Esophagus squamous epithelium (tissue), 5 donors: ENCODE measurements at regions of chr5 and their contacts with region 1.

Region 1: DNA sequence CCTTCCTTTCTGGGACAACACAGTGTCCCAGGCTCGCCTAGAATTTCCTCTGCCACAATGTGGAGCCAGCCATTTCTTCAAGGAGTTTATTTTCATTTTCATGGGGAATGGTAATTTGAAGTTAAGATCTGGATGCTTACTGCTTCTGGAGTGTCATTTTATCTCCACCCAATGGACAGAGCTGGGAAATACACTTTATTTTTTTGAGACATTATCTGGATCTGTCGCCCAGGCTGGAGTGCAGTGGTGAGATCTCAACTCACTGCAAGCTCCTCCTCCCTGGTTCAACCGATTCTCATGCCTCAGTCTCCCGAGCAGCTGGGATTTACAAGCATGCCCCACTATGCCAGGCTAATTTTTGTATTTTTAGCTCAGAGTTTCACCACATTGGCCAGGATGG is 12.7 kb upstream of the THG1L start:
- DNase-seq: no peak
- H3K4me3 ChIP-seq: no peak overlapping the region
- H3K27ac ChIP-seq: no peak overlapping the region
- H3K4me1 ChIP-seq: peaks cover 0 to 13% (median 0%) of the 10 kb centered on the region in 3 donors
- H3K27me3 ChIP-seq: no peaks in the 10 kb centered on the region
- CTCF ChIP-seq: peak; percentile 30 to 72 (median 58)
- POLR2A ChIP-seq: no peak

Region 2: GRCh38 chr5:157294407-157295091 is 424.0 kb before region 1 on chr5:
- intact Hi-C with region 1: no loop called
- DNase-seq: no peak
- H3K4me3 ChIP-seq: no peak overlapping the region
- H3K27ac ChIP-seq: no peak overlapping the region
- H3K4me1 ChIP-seq: no peaks in the 10 kb centered on the region
- H3K27me3 ChIP-seq: no peaks in the 10 kb centered on the region
- CTCF ChIP-seq: no peak
- POLR2A ChIP-seq: no peak

Region 3: GRCh38 chr5:157431544-157432200 is 286.8 kb before region 1 on chr5:
- intact Hi-C with region 1: loop called (anchors 5 kb)
- DNase-seq: no peak
- H3K4me3 ChIP-seq: no peak overlapping the region
- H3K27ac ChIP-seq: no peak overlapping the region
- H3K4me1 ChIP-seq: no peaks in the 10 kb centered on the region
- H3K27me3 ChIP-seq: no peaks in the 10 kb centered on the region
- CTCF ChIP-seq: peak; percentile 51 to 74 (median 54)
- POLR2A ChIP-seq: no peak

Region 4: DNA sequence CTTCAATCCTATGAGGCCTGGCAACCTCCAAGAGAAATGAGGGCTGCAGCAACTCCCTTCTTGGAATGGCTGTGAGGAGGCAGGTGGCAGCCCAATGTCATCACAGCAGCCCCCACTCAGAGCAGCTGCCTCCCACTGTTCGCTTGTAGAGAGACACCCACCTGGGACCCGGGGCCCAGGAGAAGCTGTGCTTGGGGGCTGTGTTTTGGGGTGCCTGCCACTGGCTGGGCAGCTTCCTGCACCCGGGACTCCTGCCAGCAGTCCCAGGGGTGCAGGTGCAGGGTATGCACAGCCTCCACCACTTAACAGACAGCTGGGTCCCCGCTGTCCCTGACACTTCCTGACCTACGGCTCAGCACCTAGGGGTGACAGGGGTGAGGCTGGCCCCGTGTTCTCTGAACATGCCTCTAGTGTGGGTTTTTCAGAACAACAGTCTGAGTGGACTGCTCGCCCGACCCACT is 232.3 kb before region 1 on chr5:
- intact Hi-C with region 1: loop called (anchors 10 kb)
- DNase-seq: no peak
- H3K4me3 ChIP-seq: no peak overlapping the region
- H3K27ac ChIP-seq: peak overlapping the region in 2 of 4 donors; percentile 19 to 49
- H3K4me1 ChIP-seq: peaks cover 0 to 22% (median 5%) of the 10 kb centered on the region in 3 donors
- H3K27me3 ChIP-seq: no peaks in the 10 kb centered on the region
- CTCF ChIP-seq: no peak
- POLR2A ChIP-seq: no peak

Region 5: DNA sequence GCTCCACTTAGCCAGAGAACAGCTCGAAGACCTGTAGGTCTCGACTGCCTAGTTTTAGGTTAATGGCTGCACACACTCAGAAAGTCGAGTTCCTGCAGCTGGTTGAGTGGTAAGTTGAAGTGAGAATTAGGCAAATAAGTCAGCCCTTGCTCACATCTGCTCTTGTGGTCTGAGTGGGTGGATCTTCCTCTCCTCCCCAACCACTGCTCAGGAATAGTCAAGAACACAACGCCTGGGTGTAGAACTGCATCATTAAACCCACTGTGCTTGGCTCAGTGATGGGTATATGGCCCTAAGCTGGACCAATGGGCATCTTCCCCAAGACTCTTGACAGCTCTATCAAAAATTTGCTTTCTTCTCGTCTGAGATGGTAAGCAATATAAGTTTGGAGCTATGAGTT is 122.0 kb before region 1 on chr5:
- intact Hi-C with region 1: no loop called
- DNase-seq: no peak
- H3K4me3 ChIP-seq: no peak overlapping the region
- H3K27ac ChIP-seq: no peak overlapping the region
- H3K4me1 ChIP-seq: peaks cover 0 to 10% (median 6%) of the 10 kb centered on the region in 3 donors
- H3K27me3 ChIP-seq: no peaks in the 10 kb centered on the region
- CTCF ChIP-seq: no peak
- POLR2A ChIP-seq: no peak

Region 6: GRCh38 chr5:157630341-157630740 is 88.2 kb before region 1 on chr5:
- intact Hi-C with region 1: no loop called
- DNase-seq: no peak
- H3K4me3 ChIP-seq: no peak overlapping the region
- H3K27ac ChIP-seq: no peak overlapping the region
- H3K4me1 ChIP-seq: no peaks in the 10 kb centered on the region
- H3K27me3 ChIP-seq: no peaks in the 10 kb centered on the region
- CTCF ChIP-seq: no peak
- POLR2A ChIP-seq: no peak

Region 7: DNA sequence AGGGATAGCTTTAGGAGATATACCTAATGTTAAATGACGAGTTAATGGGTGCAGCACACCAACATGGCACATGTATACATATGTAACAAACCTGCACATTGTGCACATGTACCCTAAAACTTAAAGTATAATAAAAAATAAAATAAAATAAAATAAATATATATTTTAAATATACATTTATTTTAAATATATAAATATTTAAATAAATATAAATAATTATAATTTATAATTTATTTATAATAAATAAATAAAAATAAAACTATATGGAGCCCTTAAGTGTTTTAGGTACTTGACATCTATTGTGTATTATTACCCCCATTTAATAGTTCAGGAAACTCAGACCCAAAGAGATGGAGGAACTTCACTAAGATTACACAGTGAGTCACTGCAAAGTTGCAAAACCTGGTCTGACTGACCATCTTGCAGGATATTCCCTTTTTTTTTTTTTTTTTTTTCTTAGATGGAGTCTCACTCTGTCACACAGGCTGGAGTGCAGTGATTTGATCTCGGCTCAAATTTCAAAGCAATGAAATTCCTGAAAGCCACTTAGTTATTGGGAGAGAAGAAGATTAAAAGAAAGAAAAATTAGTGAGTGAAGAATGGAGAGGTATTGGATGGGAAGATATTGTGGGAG is 52.9 kb before region 1 on chr5:
- intact Hi-C with region 1: loop called (anchors 10 kb)
- DNase-seq: no peak
- H3K4me3 ChIP-seq: no peak overlapping the region
- H3K27ac ChIP-seq: no peak overlapping the region
- H3K4me1 ChIP-seq: peaks cover 0 to 5% (median 4%) of the 10 kb centered on the region in 3 donors
- H3K27me3 ChIP-seq: no peaks in the 10 kb centered on the region
- CTCF ChIP-seq: no peak
- POLR2A ChIP-seq: no peak

Region 8: GRCh38 chr5:157835041-157835440 is 116.5 kb after region 1 on chr5:
- intact Hi-C with region 1: no loop called
- DNase-seq: no peak
- H3K4me3 ChIP-seq: no peak overlapping the region
- H3K27ac ChIP-seq: no peak overlapping the region
- H3K4me1 ChIP-seq: peaks cover 0 to 27% (median 0%) of the 10 kb centered on the region in 3 donors
- H3K27me3 ChIP-seq: no peaks in the 10 kb centered on the region
- CTCF ChIP-seq: no peak
- POLR2A ChIP-seq: no peak